Activated T-helper 1 cell treated with anti-CD3 and anti-CD28 coated beads, Interleukin-12 subunit alpha, Interleukin-12 subunit beta, Interleukin-2, Interleukin-4 antibody, amounts not matched to agents 30 ng/mL and 10 ng/mL and 1 ng/mL, durations not matched to agents 14 hours and 24 hours and 36 hours (primary cell): ENCODE measurements at regions of chr2 and their contacts with region 1.

Region 1: DNA sequence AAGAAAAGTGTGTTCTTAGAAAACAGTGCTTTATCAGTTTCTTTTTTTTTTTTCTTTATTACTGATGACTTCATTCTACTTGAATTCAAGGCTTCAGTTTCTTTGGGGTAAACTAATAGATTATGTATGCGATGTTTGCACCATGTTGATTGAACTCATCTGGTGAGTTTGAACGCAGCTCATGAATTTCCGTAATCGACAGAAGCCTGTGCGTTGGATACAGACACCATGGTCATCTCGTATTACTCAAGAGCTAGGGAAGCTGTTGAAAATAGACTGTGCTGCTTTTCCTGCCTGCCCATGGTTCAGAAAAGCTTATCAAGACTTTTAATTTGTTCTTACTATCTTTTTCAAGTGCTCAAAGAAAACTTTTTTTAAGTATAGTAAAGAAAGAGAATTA is 185.5 kb upstream of the NRP2 start:
- DNase-seq: no peak
- H3K4me3 Mint-ChIP-seq: no peak overlapping the region
- H3K27ac Mint-ChIP-seq: no peak overlapping the region
- H3K4me1 Mint-ChIP-seq: no peaks in the 10 kb centered on the region
- H3K27me3 Mint-ChIP-seq: peaks cover 6% of the 10 kb centered on the region

Region 2: DNA sequence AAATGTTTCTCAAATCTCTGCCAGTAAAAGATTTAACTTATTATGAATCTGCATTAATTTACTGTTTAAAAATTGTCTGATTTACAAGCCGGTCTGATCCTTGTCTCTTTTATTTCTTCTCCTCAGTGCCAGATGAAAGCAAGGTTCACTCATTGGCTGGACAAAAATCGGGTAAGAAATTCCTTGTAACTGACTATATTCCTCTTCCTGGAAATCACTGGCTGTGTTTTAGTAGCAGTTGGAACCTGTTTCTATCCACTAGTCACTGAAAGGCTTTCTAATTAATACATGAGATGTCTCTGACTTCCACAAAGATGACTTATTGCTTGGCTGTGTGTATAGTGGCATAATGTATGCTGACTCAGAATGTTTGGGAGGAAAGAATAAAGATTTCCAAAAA is 251.1 kb before region 1 on chr2:
- intact Hi-C with region 1: loop called (anchors 5 kb)
- DNase-seq: no peak
- H3K4me3 Mint-ChIP-seq: no peak overlapping the region
- H3K27ac Mint-ChIP-seq: no peak overlapping the region
- H3K4me1 Mint-ChIP-seq: no peaks in the 10 kb centered on the region
- H3K27me3 Mint-ChIP-seq: peaks cover 3% of the 10 kb centered on the region

Region 3: GRCh38 chr2:205435970-205436369 is 60.8 kb before region 1 on chr2:
- intact Hi-C with region 1: no loop called
- DNase-seq: no peak
- H3K4me3 Mint-ChIP-seq: no peak overlapping the region
- H3K27ac Mint-ChIP-seq: no peak overlapping the region
- H3K4me1 Mint-ChIP-seq: peaks cover 5% of the 10 kb centered on the region
- H3K27me3 Mint-ChIP-seq: peaks cover 3% of the 10 kb centered on the region

Region 4: DNA sequence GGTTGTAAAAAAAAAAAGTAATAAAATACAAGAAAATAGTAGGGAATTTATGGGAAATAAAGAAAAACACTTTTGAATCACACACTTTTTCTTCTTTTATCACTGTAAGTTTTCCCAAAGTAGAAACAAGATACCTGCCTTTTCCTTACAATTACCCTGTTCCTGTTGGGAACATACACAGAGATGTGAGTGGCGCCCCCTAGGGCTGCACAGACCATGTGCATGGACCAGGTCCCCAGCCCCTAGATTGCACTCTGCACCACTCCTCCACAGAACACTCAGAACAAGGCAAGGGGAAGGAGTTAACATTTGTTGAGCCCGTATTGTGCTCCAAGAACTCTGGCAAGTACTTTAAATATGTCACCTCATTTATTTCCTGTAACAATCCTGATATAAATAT is 66.9 kb after region 1 on chr2:
- intact Hi-C with region 1: no loop called
- DNase-seq: no peak
- H3K4me3 Mint-ChIP-seq: no peak overlapping the region
- H3K27ac Mint-ChIP-seq: no peak overlapping the region
- H3K4me1 Mint-ChIP-seq: no peaks in the 10 kb centered on the region
- H3K27me3 Mint-ChIP-seq: peaks cover 2% of the 10 kb centered on the region

Region 5: GRCh38 chr2:205731583-205732071 is 234.9 kb after region 1 on chr2:
- intact Hi-C with region 1: no loop called
- DNase-seq: no peak
- H3K4me3 Mint-ChIP-seq: no peak overlapping the region
- H3K27ac Mint-ChIP-seq: no peak overlapping the region
- H3K4me1 Mint-ChIP-seq: no peaks in the 10 kb centered on the region
- H3K27me3 Mint-ChIP-seq: no peaks in the 10 kb centered on the region